ENCODE measurements at regions of chr1 and their contacts with region 1.

Region 1: DNA sequence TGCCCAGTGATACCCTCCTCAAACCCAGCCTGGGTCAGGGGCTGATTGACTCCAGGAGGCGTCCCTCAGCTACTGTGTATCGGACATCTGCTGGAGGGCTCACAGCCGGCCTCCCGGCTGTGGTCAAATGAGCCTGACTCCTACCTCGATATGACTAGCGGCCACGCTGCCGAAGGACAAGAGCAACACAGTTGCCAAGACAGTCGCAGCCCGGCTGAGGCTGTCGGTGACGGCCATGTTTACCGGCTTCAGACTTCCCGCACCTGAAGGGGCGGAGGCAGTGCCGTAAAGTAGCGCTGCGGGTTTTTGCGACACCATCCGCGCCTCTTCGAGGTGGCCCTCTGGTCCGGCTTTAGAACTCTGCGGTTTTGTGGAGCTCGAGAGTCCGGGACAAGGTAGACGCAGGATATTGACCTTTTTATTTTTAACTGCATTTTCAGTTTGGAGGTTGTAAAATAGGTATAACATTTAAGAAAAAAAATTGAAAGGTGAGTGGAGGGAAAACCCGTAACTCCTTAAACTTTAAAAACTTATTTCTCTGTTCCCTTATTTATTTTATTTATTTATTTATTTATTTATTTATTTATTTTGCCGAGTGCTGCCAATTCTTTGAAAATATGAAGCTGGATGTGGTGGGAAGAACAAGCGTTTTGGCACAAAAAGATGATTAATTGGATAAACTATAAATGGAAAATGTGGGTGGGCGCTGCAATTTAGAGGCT is at the start of gene PIGK:
- DNase-seq: peak; percentile 94
- H3K4me3 Mint-ChIP-seq: peak within 1 kb of the TSS; percentile 93
- H3K27ac Mint-ChIP-seq: peak within 1 kb of the TSS; percentile 89
- H3K4me1 Mint-ChIP-seq: peaks cover 38% of the 10 kb centered on the region
- H3K27me3 Mint-ChIP-seq: no peaks in the 10 kb centered on the region
- total RNA-seq, gene PIGK: 23.9 to 26.5 TPM

Region 2: DNA sequence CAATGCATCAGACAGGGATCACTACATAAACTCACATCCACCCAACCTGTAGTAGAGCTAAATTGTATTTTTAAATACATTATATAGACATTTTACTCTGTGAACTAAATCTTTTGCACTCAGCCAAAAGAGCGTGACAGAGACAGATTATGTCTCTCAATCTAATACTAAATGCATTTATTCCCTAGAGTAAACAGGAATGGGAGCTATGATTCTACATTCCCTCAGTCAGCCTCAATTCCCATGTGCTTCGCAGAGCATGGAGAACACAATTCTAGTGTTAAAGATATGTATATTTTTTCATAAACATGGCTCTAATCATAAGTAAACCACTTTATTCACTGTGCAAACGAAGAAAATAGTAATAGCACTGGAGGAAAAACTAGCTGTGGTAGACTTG is 16.6 kb before region 1 on chr1:
- CTCF ChIA-PET with region 1: no interaction called
- POLR2A ChIA-PET with region 1: no interaction called
- intact Hi-C with region 1: no loop called
- DNase-seq: no peak
- H3K4me3 Mint-ChIP-seq: no peak overlapping the region
- H3K27ac Mint-ChIP-seq: no peak overlapping the region
- H3K4me1 Mint-ChIP-seq: peaks cover 3% of the 10 kb centered on the region
- H3K27me3 Mint-ChIP-seq: no peaks in the 10 kb centered on the region

Region 3: DNA sequence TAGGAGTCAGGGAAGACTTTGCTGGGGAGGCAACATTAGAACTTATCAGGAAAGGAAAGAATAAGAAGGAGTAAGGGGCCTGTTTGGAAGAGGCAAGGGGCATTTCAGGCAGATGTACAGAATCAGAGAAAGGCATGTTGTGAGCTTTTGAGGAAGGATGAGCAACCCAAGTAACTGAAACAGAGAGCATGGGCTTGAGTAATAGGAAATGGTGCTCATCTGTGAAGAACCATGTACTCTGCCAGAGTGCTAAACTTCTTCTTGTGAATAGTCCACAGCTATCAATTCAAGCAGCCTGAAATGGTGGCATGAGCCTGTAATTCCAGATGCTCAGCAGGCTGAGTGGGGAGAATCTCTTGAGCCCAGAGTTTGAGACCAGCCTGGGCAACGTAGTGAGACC is 19.1 kb after region 1 on chr1:
- CTCF ChIA-PET with region 1: no interaction called
- POLR2A ChIA-PET with region 1: no interaction called
- intact Hi-C with region 1: no loop called
- DNase-seq: no peak
- H3K4me3 Mint-ChIP-seq: no peak overlapping the region
- H3K27ac Mint-ChIP-seq: no peak overlapping the region
- H3K4me1 Mint-ChIP-seq: no peaks in the 10 kb centered on the region
- H3K27me3 Mint-ChIP-seq: peaks cover 3% of the 10 kb centered on the region

Region 4: DNA sequence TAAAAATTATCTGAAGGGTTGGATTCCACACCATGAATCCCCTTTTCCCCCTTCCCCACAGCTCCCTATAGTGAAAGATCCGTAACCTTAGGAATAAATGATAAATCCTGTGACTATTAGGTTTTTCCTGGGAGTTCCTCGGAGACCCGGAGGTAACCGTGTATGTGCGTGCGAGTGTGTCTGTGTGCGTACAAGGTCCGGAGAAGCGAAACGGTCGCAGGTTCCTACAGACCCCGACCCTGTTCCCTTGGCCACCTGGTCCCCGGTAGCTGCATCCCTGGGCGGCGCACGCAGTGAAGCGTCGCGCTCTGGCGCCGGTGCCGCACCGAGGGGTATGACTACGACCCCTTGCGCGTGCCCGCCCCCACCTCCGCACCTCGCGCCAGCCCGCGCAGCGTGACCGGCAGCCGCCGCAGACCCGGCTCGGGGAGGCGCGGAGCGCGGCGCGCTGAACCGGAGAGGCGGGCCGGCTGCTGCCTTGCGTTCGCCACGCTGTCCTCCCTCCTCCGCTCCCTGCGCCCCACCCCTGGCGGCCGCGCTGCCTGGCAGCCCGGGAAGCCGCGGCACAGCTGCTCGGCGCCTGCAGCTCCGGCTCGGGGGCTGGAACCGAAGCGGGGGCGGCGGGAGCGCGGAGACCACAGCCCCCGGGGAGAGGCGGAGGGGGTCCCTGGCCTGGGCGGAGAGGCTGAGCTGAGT is 62.3 kb after region 1 on chr1 and contains the start of gene AK5:
- CTCF ChIA-PET with region 1: no interaction called
- POLR2A ChIA-PET with region 1: interaction called, 4 read pairs
- intact Hi-C with region 1: loop called (anchors 2 kb)
- DNase-seq: peak; percentile 56
- H3K4me3 Mint-ChIP-seq: peak within 1 kb of the TSS; percentile 64
- H3K27ac Mint-ChIP-seq: no peak within 1 kb of the TSS
- H3K4me1 Mint-ChIP-seq: peaks cover 21% of the 10 kb centered on the region
- H3K27me3 Mint-ChIP-seq: peaks cover 5% of the 10 kb centered on the region
- total RNA-seq, gene AK5: 1.6 to 2.2 TPM

Region 5: GRCh38 chr1:77438236-77438913 is 219.0 kb after region 1 on chr1:
- CTCF ChIA-PET with region 1: no interaction called
- POLR2A ChIA-PET with region 1: no interaction called
- intact Hi-C with region 1: loop called (anchors 2 kb)
- DNase-seq: no peak
- H3K4me3 Mint-ChIP-seq: peak overlapping the region; percentile 51
- H3K27ac Mint-ChIP-seq: peak overlapping the region; percentile 34
- H3K4me1 Mint-ChIP-seq: peaks cover 28% of the 10 kb centered on the region
- H3K27me3 Mint-ChIP-seq: no peaks in the 10 kb centered on the region

Region 6: GRCh38 chr1:77759071-77760028 is 540.0 kb after region 1 on chr1 and contains the start of gene USP33:
- CTCF ChIA-PET with region 1: no interaction called
- POLR2A ChIA-PET with region 1: no interaction called
- intact Hi-C with region 1: loop called (anchors 10 kb)
- DNase-seq: peak; percentile 95
- H3K4me3 Mint-ChIP-seq: peak within 1 kb of the TSS; percentile 96
- H3K27ac Mint-ChIP-seq: peak within 1 kb of the TSS; percentile 94
- H3K4me1 Mint-ChIP-seq: peaks cover 47% of the 10 kb centered on the region
- H3K27me3 Mint-ChIP-seq: no peaks in the 10 kb centered on the region
- total RNA-seq, gene USP33: 37.7 to 41.0 TPM

Measured in activated CD4-positive, alpha-beta memory T cell treated with anti-CD3 and anti-CD28 coated beads for 36 hours (primary cell).